Caco-2 (cell line): ENCODE measurements at regions of chr4 and their contacts with region 1.

Region 1: DNA sequence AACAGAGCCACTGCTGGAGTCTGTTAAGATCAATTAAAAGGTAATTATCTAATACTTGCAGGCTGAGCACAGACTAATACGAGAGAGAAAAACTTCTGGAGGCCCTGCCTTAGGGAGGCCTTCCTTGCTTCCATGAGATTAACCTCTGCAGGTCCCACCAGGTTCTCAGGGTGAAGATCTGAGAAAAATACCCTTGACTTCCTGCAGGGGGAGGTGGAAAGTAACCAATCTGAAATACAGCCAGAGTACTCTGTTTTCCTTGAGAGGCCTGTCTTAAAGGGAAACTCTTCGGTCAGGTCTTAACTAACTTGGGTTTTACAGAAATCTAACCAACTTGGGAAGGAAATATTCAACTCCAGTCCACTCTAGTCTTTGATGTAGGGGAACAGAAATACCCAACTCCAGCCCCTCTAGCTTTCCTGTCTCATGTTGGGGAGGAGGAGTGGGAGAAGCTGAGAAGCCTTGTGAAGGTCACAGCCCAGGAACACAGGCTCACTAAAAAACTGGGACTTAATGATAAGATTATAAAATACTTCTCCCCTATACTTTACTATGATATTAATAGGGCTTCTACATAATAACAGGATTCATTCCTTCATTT is 77.1 kb downstream of the TBCK start:
- DNase-seq: peak; percentile 50 to 70
- H3K4me3 ChIP-seq: no peak overlapping the region
- H3K4me3 Mint-ChIP-seq: no peak overlapping the region
- H3K27ac Mint-ChIP-seq: peak overlapping the region; percentile 12
- H3K4me1 ChIP-seq: no peaks in the 10 kb centered on the region; the same call in 1 of the 2 replicates
- H3K4me1 Mint-ChIP-seq: peaks cover 14% of the 10 kb centered on the region
- H3K27me3 ChIP-seq: no peaks in the 10 kb centered on the region
- H3K27me3 Mint-ChIP-seq: no peaks in the 10 kb centered on the region
- CTCF ChIP-seq: peak; percentile 74 to 81

Region 2: GRCh38 chr4:106315968-106316772 is 77.2 kb after region 1 on chr4 and contains the starts of genes AIMP1 and TBCK:
- CTCF ChIA-PET with region 1: no interaction called
- POLR2A ChIA-PET with region 1: no interaction called
- intact Hi-C with region 1: loop called (anchors 1 kb)
- DNase-seq: peak; percentile 88 to 91
- H3K4me3 ChIP-seq: peak within 1 kb of the TSS; percentile 75
- H3K4me3 Mint-ChIP-seq: no peak within 1 kb of the TSS
- H3K27ac Mint-ChIP-seq: no peak within 1 kb of the TSS
- H3K4me1 ChIP-seq: peaks cover 38% of the 10 kb centered on the region
- H3K4me1 Mint-ChIP-seq: peaks cover 11% of the 10 kb centered on the region
- H3K27me3 ChIP-seq: no peaks in the 10 kb centered on the region
- H3K27me3 Mint-ChIP-seq: no peaks in the 10 kb centered on the region
- CTCF ChIP-seq: no peak
- total RNA-seq, gene AIMP1: 130 and 143 TPM in 2 replicates
- total RNA-seq, gene TBCK: 51.1 and 58.7 TPM in 2 replicates